ENCODE measurements at regions of chr20 and their contacts with region 1.

Region 1: GRCh38 chr20:38229376-38230252 is 30.9 kb downstream of the KIAA1755 start:
- DNase-seq: no peak
- H3K4me3 ChIP-seq: no peak overlapping the region
- H3K27me3 ChIP-seq: no peaks in the 10 kb centered on the region
- CTCF ChIP-seq: peak; percentile 57

Region 2: GRCh38 chr20:38304845-38305447 is 75.3 kb after region 1 on chr20:
- CTCF ChIA-PET with region 1: interaction called, 188 read pairs
- POLR2A ChIA-PET with region 1: no interaction called
- DNase-seq: no peak
- H3K4me3 ChIP-seq: no peak overlapping the region
- H3K27me3 ChIP-seq: peaks cover 2% of the 10 kb centered on the region; the same call in 1 of the 2 replicates
- CTCF ChIP-seq: peak; percentile 81

Region 3: GRCh38 chr20:38315290-38315966 is 85.8 kb after region 1 on chr20:
- CTCF ChIA-PET with region 1: interaction called, 48 read pairs
- POLR2A ChIA-PET with region 1: no interaction called
- DNase-seq: no peak
- H3K4me3 ChIP-seq: no peak overlapping the region
- H3K27me3 ChIP-seq: peaks cover 9% of the 10 kb centered on the region
- CTCF ChIP-seq: peak; percentile 41

Region 4: GRCh38 chr20:38321959-38322598 is 92.5 kb after region 1 on chr20:
- CTCF ChIA-PET with region 1: interaction called, 19 read pairs
- POLR2A ChIA-PET with region 1: no interaction called
- DNase-seq: no peak
- H3K4me3 ChIP-seq: no peak overlapping the region
- H3K27me3 ChIP-seq: peaks cover 13% of the 10 kb centered on the region
- CTCF ChIP-seq: peak; percentile 74